A673 (cell line): ENCODE measurements at regions of chr1 and their contacts with region 1.

Region 1: GRCh38 chr1:11611638-11612327 is 42.4 kb downstream of the FBXO2 start:
- DNase-seq: no peak
- H3K4me3 ChIP-seq: no peak overlapping the region
- H3K27ac ChIP-seq: no peak overlapping the region
- H3K4me1 ChIP-seq: no peaks in the 10 kb centered on the region
- H3K27me3 ChIP-seq: peaks cover 41% of the 10 kb centered on the region
- CTCF ChIP-seq: no peak

Region 2: DNA sequence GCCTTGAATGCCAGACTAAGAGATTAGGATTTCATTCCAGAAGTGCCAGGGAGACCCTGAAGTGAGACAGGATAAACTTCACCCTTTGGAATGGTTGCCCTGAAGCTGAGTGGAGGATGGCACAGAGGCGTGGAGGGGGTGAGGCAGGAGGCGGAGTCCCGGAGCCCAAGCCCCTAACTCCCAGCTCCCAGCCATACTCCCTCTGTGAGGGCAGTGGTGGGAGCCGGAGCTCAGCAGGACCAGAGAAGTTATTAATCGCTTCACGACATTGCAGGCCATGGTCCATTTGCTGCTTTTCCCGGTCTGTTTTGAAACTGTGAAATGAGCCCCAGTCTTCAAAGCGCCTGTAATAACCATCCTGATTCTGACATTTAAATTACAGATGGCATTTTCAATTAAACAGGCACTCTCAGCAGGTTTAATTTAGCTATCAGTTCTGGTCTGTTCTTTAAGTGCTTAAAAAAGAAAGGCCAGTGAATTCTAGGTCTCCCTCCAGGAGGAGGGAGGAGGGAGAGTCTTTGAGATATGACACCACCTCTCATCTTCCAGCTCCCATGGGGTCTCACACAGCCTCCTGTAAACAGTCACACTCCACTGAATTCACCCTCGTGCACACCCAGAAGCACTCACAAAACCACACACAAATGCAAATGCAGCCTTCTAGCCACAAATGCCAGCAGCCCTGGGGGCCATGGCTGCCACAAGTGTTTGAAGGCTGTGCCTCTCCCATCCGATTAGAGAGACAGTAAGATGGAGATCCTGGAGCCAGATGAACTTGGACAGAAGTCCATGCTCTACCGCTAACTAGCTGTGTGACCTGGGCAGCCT is 22.8 kb after region 1 on chr1:
- CTCF ChIA-PET with region 1: interaction called, 11 read pairs
- POLR2A ChIA-PET with region 1: no interaction called
- intact Hi-C with region 1: no loop called
- DNase-seq: no peak
- H3K4me3 ChIP-seq: no peak overlapping the region
- H3K27ac ChIP-seq: no peak overlapping the region
- H3K4me1 ChIP-seq: no peaks in the 10 kb centered on the region
- H3K27me3 ChIP-seq: peaks cover 37% of the 10 kb centered on the region
- CTCF ChIP-seq: no peak